Left ventricle myocardium inferior (tissue), 1 donor: ENCODE measurements at regions of chr12 and their contacts with region 1.

Region 1: GRCh38 chr12:92649511-92650227 is 53.1 kb upstream of the PLEKHG7 start:
- DNase-seq: no peak
- H3K4me3 ChIP-seq: no peak overlapping the region
- H3K27ac ChIP-seq: no peak overlapping the region
- H3K4me1 ChIP-seq: no peaks in the 10 kb centered on the region
- H3K27me3 ChIP-seq: no peaks in the 10 kb centered on the region
- CTCF ChIP-seq: peak; percentile 78

Region 2: DNA sequence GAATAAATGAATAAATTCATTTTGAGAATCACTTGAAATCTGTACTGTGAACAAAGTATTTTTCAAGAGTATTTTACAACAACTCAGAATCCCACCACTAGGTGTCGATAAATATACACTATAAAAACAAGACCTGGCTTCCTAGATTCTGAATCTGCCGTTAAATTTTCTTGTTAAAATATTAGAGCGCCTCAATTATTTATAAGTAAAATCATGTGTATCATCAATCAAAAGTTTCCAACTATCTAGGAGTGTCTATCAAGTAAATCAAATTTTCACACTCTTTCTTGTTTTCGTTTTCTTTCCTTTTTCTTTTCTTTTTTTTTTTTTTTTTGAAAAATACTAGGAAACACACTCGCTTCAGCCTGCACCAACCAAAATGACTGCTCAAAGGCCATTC is 1287.8 kb before region 1 on chr12:
- intact Hi-C with region 1: loop called (anchors 5 kb)
- DNase-seq: no peak
- H3K4me3 ChIP-seq: no peak overlapping the region
- H3K27ac ChIP-seq: no peak overlapping the region
- H3K4me1 ChIP-seq: no peaks in the 10 kb centered on the region
- H3K27me3 ChIP-seq: no peaks in the 10 kb centered on the region
- CTCF ChIP-seq: peak; percentile 77

Region 3: DNA sequence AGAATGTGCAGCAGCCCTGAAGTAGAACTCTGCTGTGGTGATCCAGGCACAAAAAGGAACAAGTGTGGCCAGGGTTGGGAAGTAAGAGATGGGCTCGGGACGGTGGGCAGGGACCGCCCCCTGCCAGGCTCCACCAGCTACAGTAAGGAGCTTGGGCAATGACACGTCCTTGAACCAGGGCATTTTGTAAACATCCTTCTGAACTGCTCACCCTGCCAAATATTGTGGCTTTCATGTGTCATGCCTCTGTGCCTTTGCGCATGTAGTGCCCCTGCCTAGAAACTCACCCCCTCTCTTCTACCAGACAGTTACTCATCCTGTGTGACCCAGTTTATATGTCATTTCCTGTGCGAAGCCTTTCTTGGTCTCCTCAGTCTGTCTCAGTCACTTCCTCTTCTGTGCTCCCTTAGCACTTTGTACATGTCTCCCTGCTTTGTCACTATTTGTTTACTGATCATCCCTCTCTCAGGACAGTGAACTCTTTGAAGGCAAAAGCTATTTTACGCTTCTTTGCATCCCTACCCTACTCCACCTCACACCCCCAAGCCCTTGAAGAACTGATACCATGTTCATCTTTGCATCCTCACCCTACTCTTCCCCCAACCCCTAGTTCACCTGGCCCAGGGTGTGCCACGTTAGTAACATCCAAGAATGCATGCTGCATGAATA is 55.8 kb before region 1 on chr12:
- intact Hi-C with region 1: no loop called
- DNase-seq: no peak
- H3K4me3 ChIP-seq: no peak overlapping the region
- H3K27ac ChIP-seq: no peak overlapping the region
- H3K4me1 ChIP-seq: no peaks in the 10 kb centered on the region
- H3K27me3 ChIP-seq: no peaks in the 10 kb centered on the region
- CTCF ChIP-seq: no peak